ENCODE measurements at regions of chr20 and their contacts with region 1.

Region 1: DNA sequence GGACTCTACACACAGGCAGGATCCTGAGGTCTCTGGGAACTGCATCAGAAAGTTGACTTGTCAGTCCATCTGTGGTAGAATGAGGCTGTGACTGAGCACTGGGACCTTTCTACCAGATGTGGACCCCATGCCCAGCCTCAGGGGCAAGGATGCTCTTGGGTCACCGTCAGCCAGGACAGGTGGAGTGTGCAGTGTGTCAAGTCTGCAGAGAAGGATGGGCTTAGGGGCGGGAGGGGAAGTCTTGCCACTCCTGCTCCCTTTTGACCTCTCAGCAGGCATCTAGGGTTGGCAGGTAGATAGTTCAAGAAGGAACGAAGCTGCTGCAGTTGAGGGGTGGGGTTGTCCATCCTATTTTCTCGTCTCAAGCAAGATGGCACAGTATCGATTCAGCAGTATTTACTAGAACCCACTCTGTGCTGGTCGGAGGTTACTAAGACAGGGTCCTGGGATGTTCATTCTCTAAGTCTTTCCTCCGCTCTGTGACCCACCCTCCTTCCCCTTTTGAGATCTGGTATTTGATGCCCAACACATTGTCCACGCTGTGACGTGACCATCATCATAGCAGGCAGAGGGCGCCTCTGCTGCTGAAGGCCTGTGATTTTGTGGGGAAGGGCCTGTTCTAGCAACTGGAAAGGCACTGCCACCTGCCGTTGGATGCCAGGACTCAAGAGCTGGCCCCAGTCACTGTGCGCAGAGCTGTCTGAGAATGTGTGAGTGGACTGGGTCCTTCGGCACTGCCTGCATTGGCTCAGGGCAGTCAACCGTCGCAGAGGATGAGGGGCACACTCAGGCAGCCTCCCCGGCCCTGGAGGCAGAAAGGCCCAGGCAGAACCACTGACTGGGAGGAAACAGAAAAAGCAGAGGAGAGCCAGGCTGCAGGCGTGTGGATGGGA is 23.2 kb downstream of the RBCK1 start:
- DNase-seq: peak; percentile 94 to 95
- ATAC-seq: peak; percentile 70 to 93
- H3K4me3 ChIP-seq: no peak overlapping the region
- H3K27ac ChIP-seq: peak overlapping the region; percentile 27 to 73; a peak in 5 of 6 replicates
- H3K4me1 ChIP-seq: peaks cover 16% of the 10 kb centered on the region
- CTCF ChIP-seq: peak; percentile 99
- EP300 ChIP-seq: no peak
- POLR2A ChIP-seq: no peak
- RAD21 ChIP-seq: peak; percentile 95 to 98

Region 2: GRCh38 chr20:401682-402495 is 29.4 kb before region 1 on chr20:
- CTCF ChIA-PET with region 1: interaction called, 81 read pairs
- POLR2A ChIA-PET with region 1: interaction called, 7 read pairs
- DNase-seq: peak; percentile 99 to 100
- ATAC-seq: peak; percentile 85 to 90
- H3K4me3 ChIP-seq: 0 out of 3 replicates have a peak overlapping the region, but pooled peaks have one; percentile 4
- H3K27ac ChIP-seq: peak overlapping the region; percentile 93 to 99
- H3K4me1 ChIP-seq: peaks cover 42% of the 10 kb centered on the region
- CTCF ChIP-seq: no peak
- EP300 ChIP-seq: peak; percentile 97 to 98; a peak in 4 of 5 replicates
- POLR2A ChIP-seq: no peak
- RAD21 ChIP-seq: peak in 1 of 2 experiments; percentile 9; a peak in 1 of 5 replicates

Region 3: GRCh38 chr20:414161-414560 is 17.1 kb before region 1 on chr20:
- CTCF ChIA-PET with region 1: interaction called, 56 read pairs
- POLR2A ChIA-PET with region 1: interaction called, 3 read pairs
- DNase-seq: no peak
- ATAC-seq: no peak
- H3K4me3 ChIP-seq: no peak overlapping the region
- H3K27ac ChIP-seq: no peak overlapping the region
- H3K4me1 ChIP-seq: peaks cover 33% of the 10 kb centered on the region
- CTCF ChIP-seq: no peak
- EP300 ChIP-seq: no peak
- POLR2A ChIP-seq: no peak
- RAD21 ChIP-seq: no peak

Region 4: GRCh38 chr20:444862-445426 is 13.7 kb after region 1 on chr20:
- CTCF ChIA-PET with region 1: interaction called, 153 read pairs
- POLR2A ChIA-PET with region 1: no interaction called
- DNase-seq: no peak
- ATAC-seq: peak in 1 of 2 experiments; percentile 55; a peak in 3 of 6 replicates
- H3K4me3 ChIP-seq: no peak overlapping the region
- H3K27ac ChIP-seq: peak overlapping the region in 1 of 2 experiments; percentile 65; a peak in 3 of 6 replicates
- H3K4me1 ChIP-seq: peaks cover 22% of the 10 kb centered on the region
- CTCF ChIP-seq: no peak
- EP300 ChIP-seq: no peak
- POLR2A ChIP-seq: no peak
- RAD21 ChIP-seq: no peak

Region 5: DNA sequence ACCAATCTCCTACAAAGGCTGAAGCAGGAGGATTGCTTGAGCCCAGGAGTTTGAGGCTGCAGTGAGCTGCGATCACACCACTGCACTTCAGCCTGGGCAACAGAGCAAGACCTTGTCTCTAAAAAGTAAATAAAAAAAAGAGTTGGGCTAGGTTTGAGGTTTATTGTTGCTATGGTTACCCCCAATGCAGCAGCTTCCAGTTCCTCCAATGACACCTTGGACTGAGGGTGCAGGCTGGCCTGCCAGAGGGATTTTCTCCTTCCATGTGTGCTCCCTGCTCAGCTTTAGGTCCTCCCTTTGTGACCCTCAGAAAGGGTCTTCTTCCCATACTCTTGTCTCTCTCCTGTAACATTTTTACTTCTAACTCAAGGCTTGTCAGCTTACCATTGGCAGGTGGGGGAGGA is 41.6 kb after region 1 on chr20:
- CTCF ChIA-PET with region 1: interaction called, 50 read pairs
- POLR2A ChIA-PET with region 1: no interaction called
- DNase-seq: no peak
- ATAC-seq: peak; percentile 26 to 54; a peak in 3 of 6 replicates
- H3K4me3 ChIP-seq: no peak overlapping the region
- H3K27ac ChIP-seq: no peak overlapping the region
- H3K4me1 ChIP-seq: no peaks in the 10 kb centered on the region
- CTCF ChIP-seq: no peak
- EP300 ChIP-seq: no peak
- POLR2A ChIP-seq: no peak
- RAD21 ChIP-seq: no peak

Region 6: DNA sequence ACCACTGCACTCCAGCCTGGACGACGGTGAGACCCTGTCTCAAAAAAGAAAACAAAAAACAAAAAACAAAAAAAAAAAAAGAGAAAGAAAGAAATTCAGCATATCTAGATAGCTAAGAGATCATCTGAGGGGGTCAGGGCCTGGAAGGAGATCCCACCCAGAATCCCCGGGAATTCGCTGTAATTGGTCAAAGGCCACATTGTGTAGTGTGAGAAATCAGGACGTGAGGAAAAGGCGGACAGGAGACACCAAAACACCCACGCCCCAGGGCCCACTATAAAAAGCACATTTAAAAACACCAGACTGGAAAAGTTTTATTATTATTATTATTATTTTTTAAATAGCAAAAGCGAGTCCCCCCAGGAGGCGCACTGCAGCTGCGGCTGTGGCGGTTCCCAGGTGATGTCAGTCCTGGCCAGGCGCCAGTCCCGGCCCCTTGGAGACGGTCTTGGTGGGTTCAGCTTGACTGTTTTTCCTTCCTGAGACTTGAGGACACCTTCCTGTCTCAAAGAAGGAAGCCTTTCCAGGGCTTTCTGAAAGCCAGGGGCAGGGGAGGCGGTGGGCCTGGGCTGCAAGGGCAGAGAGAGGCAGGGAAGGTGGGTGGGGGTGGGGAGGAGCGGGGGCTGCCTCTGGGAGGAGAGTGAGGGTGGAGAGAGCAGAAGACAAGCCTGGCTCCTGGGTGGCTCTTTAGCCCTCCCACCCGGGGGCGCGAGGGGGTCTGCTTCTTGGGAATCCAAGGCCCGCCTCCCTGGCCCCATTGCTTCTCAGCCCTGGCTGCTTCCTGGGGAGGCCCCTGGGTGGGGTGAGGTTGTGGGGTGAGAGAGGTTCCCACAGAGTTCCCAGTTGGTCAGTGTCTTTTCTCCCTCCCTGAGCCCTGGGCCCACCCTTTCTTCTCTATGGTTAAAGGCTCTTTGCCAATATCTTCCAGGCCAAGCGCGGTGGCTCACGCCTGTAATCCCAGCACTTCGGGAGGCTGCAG is 164.4 kb after region 1 on chr20:
- CTCF ChIA-PET with region 1: no interaction called
- POLR2A ChIA-PET with region 1: no interaction called
- DNase-seq: no peak
- ATAC-seq: no peak
- H3K4me3 ChIP-seq: no peak overlapping the region
- H3K27ac ChIP-seq: no peak overlapping the region
- H3K4me1 ChIP-seq: no peaks in the 10 kb centered on the region
- CTCF ChIP-seq: no peak
- EP300 ChIP-seq: no peak
- POLR2A ChIP-seq: no peak
- RAD21 ChIP-seq: no peak

Region 7: GRCh38 chr20:621125-621756 is 190.0 kb after region 1 on chr20:
- CTCF ChIA-PET with region 1: no interaction called
- POLR2A ChIA-PET with region 1: no interaction called
- DNase-seq: no peak
- ATAC-seq: peak; percentile 23 to 42; a peak in 3 of 6 replicates
- H3K4me3 ChIP-seq: no peak overlapping the region
- H3K27ac ChIP-seq: no peak overlapping the region
- H3K4me1 ChIP-seq: no peaks in the 10 kb centered on the region
- CTCF ChIP-seq: no peak
- EP300 ChIP-seq: no peak
- POLR2A ChIP-seq: no peak
- RAD21 ChIP-seq: no peak

Measured in A549 (cell line).